ENCODE measurements at regions of chr19 and their contacts with region 1.

Region 1: DNA sequence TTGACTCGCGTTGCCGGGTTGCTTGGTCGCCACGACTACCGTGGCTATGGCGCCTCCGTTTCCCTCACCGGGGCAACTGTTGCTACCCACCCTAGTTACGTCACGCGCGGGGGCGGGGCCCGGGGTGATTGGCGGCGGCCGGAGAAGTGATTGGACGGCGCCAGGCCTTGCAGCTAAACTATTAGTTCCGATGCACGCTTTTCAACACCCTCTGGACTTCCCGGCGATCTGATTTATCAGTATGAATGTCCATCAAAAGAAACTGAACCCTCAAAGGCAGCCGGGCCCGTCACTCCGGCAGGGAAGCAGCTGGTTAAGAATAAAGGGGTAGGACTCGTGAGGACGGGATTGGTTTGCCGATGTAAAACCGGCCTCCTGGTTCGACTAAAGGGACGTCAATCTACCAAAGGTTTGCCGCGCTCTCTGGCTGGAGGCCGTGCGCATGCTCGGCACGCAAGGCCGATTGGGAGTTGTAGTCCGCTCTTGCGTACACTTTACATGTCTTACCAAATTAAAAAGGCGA is at the start of gene RFX1:
- DNase-seq: peak; percentile 98 to 100 (median 100)
- H3K4me3 ChIP-seq: peak within 1 kb of the TSS; percentile 62 to 97 (median 89)
- H3K27ac ChIP-seq: peak within 1 kb of the TSS; percentile 94 to 100 (median 99)
- H3K27me3 ChIP-seq: no peaks in the 10 kb centered on the region
- CTCF ChIP-seq: peak in 2 of 56 donors; percentile 6 to 10
- total RNA-seq, gene RFX1: 7.9 to 26.0 (median 14.0) TPM

Region 2: GRCh38 chr19:13905938-13906904 is 100.1 kb before region 1 on chr19 and contains the starts of genes BRME1 and CC2D1A:
- intact Hi-C with region 1: loop called in 1 of 2 experiments (anchors 1 kb)
- DNase-seq: peak; percentile 90 to 98 (median 94)
- H3K4me3 ChIP-seq: peak within 1 kb of the TSS; percentile 60 to 100 (median 92)
- H3K27ac ChIP-seq: peak within 1 kb of the TSS in 45 of 59 donors; percentile 29 to 92 (median 71)
- H3K27me3 ChIP-seq: no peaks in the 10 kb centered on the region
- CTCF ChIP-seq: peak in 43 of 56 donors; percentile 6 to 56 (median 35)
- total RNA-seq, gene BRME1: 2.8 to 13.5 (median 8.1) TPM
- total RNA-seq, gene CC2D1A: 50.4 to 138 (median 75.1) TPM

Region 3: DNA sequence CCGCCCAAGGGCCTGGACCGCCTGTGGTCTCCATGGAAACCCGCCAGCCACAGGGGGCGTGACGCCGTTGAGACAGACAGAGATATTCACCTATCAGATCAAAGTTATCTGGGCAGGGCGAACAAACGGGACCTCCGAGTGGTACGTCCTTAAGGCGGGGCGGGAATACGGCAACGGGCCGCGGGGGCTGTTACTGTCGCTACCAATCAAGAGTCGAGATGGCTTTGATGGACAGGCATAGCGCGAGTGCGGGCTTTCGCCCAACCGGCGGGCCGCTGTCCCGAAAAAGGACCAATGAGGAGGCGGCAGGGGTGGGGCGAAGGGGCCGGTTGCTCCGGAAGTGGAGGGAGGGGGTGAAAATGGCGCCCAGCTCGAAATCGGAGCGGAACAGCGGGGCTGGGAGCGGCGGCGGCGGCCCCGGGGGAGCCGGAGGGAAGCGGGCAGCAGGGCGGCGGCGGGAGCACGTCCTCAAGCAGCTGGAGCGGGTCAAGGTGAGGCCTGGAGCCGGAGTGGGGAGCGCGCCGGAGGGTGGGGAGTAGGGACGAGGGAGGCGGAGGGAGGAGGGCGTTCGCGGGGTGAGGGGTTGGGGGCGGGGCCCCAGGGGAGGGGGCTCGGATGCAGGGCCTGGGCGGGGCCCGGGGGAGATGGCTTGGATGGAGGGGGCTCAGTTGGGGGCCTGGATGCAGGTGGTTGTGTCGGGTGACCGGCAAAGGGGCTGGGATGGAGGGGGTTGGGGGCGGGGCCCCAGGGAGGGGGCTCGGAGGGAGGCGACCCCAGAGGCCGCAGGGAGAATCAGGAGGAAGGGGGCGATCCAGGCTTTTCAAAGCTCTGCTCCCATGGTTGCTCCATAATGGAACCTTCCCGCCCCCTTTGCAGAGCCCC is 53.9 kb before region 1 on chr19 and contains the start of gene DCAF15:
- intact Hi-C with region 1: loop called (anchors 5 to 10 kb)
- DNase-seq: peak; percentile 98 to 100 (median 100)
- H3K4me3 ChIP-seq: peak within 1 kb of the TSS; percentile 49 to 86 (median 78)
- H3K27ac ChIP-seq: peak within 1 kb of the TSS in 51 of 59 donors; percentile 4 to 94 (median 75)
- H3K27me3 ChIP-seq: no peaks in the 10 kb centered on the region
- CTCF ChIP-seq: peak in 16 of 56 donors; percentile 8 to 41 (median 30)
- total RNA-seq, gene DCAF15: 12.2 to 26.7 (median 17.6) TPM

Region 4: DNA sequence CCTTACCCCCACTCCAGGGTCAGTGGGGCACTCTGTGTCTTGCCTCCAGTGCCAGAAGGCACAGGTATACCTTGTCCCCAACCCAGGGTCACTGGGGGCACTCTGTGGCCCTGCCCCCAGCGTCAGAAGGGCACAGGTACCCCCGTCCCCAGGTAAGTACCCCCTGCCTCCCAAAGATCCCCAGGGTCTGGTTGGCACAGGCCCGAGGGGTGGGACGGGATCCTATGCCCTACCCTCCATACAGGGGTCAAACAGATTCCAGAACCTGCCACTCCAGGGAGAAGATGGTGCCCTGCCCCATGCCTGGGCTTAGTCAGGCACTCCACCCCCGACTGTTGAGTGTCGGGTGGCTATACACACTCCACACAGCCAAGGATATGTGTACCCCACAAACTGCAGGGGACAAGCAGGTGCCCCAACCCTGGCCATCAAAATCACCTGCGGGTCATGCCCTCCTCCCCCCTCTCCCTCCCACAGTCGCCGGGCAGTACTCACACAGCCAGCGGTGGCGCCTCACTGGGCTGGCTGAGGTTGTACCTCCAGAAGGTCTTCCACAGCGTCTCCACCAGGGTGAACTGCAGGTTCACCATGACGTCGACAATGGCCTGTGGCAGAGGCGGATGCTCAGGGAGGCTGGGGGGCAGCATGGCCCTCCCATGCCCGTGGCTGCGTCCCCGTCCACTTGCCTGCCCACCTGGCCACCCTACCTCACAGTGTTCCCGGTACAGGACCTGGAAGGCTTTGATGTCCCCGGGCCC is 40.2 kb before region 1 on chr19:
- intact Hi-C with region 1: no loop called
- DNase-seq: no peak
- H3K4me3 ChIP-seq: no peak overlapping the region
- H3K27ac ChIP-seq: no peak overlapping the region
- H3K27me3 ChIP-seq: no peaks in the 10 kb centered on the region
- CTCF ChIP-seq: no peak